ENCODE measurements at regions of chr2 and their contacts with region 1.

Region 1: DNA sequence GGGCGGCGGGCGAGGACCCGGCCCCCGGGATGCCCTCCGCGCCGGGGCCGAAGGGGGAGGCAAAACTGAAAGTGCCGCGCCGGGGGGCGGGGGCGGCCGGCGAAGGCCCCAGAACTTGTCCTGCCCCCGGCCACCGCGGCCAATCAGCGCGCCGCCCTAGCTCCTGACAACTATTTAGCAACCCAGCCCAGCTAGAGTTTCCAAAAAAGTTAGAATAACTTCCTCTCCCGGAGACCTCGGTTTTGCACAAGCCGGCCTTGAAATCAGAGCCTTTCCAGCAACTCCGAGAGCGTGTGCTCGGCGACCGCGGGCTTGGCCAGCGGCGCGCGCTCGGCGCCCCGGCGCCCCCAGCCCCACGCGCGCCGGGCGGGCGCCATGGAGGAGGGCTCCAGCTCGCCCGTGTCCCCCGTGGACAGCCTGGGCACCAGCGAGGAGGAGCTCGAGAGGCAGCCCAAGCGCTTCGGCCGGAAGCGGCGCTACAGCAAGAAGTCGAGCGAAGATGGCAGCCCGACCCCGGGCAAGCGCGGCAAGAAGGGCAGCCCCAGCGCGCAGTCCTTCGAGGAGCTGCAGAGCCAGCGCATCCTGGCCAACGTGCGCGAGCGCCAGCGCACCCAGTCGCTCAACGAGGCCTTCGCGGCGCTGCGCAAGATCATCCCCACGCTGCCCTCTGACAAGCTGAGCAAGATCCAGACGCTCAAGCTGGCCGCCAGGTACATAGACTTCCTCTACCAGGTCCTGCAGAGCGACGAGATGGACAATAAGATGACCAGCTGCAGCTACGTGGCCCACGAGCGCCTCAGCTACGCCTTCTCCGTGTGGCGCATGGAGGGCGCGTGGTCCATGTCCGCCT is at the start of gene TWIST2:
- DNase-seq: peak; percentile 91
- ATAC-seq: peak; percentile 84
- H3K4me3 ChIP-seq: peak within 1 kb of the TSS; percentile 90
- H3K27ac ChIP-seq: peak within 1 kb of the TSS; percentile 95
- H3K4me1 ChIP-seq: peaks cover 17% of the 10 kb centered on the region
- H3K27me3 ChIP-seq: no peaks in the 10 kb centered on the region
- CTCF ChIP-seq: no peak; the same call in 1 of the 2 replicates
- POLR2A ChIP-seq: peak; percentile 79
- RAD21 ChIP-seq: no peak; the same call in 1 of the 2 replicates
- total RNA-seq, gene TWIST2: 9.3 and 14.7 TPM in 2 replicates

Region 2: DNA sequence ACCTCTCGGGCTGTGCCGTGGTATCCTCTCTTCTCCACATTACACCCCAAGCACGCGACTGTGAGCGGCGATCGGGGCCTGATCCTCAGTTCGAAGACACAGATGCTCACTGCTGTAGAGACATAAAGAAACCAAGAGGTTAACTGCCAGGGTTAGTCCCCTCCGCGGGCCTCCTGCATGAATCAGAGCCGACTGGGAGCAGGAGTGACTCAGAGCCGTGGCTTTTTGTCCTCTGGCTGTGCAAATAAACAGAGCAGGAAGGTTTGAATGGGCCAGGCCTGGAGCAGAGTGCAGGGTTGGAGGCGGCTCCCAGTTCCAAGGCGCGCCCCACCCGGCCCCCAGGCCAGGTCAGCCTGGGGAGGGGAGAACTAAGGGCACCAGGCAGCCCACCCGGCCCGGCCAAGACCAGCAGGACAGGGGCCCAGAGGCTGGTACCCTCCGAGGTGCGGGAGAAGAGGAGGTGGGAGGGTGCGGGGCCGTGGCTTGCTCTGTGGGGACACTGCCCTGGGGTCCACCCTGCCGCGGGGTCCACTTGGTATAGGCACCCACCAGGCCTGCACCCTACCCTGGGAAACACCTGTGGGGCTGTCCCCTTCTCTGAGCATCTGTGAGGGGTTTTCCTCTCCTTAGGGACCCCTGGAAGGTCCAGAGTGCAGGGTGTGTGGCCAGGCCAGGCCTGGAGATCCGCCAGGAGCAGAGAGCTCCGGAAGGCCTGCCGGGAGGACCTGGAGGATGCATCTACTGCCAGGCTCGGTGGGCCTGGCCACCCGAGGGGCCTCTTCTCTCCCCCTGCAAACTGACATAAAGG is 16.3 kb after region 1 on chr2:
- CTCF ChIA-PET with region 1: interaction called, 4 read pairs
- POLR2A ChIA-PET with region 1: no interaction called
- dilution Hi-C with region 1: no loop called
- in situ Hi-C with region 1: no loop called
- intact Hi-C with region 1: loop called (anchors 1 kb)
- DNase-seq: peak; percentile 99
- ATAC-seq: peak; percentile 88
- H3K4me3 ChIP-seq: no peak overlapping the region
- H3K27ac ChIP-seq: peak overlapping the region; percentile 94
- H3K4me1 ChIP-seq: peaks cover 53% of the 10 kb centered on the region
- H3K27me3 ChIP-seq: no peaks in the 10 kb centered on the region
- CTCF ChIP-seq: no peak
- POLR2A ChIP-seq: peak; percentile 46; the same call in 1 of the 2 replicates
- RAD21 ChIP-seq: peak; percentile 21; the same call in 1 of the 2 replicates

Region 3: GRCh38 chr2:238875101-238875470 is 27.0 kb after region 1 on chr2:
- CTCF ChIA-PET with region 1: interaction called, 12 read pairs
- POLR2A ChIA-PET with region 1: no interaction called
- dilution Hi-C with region 1: no loop called
- in situ Hi-C with region 1: no loop called
- intact Hi-C with region 1: no loop called
- DNase-seq: no peak
- ATAC-seq: peak; percentile 22; the same call in 1 of the 2 replicates
- H3K4me3 ChIP-seq: no peak overlapping the region
- H3K27ac ChIP-seq: no peak overlapping the region
- H3K4me1 ChIP-seq: peaks cover 6% of the 10 kb centered on the region; the same call in 1 of the 2 replicates
- H3K27me3 ChIP-seq: no peaks in the 10 kb centered on the region
- CTCF ChIP-seq: peak; percentile 38
- POLR2A ChIP-seq: no peak
- RAD21 ChIP-seq: peak; percentile 40

Region 4: DNA sequence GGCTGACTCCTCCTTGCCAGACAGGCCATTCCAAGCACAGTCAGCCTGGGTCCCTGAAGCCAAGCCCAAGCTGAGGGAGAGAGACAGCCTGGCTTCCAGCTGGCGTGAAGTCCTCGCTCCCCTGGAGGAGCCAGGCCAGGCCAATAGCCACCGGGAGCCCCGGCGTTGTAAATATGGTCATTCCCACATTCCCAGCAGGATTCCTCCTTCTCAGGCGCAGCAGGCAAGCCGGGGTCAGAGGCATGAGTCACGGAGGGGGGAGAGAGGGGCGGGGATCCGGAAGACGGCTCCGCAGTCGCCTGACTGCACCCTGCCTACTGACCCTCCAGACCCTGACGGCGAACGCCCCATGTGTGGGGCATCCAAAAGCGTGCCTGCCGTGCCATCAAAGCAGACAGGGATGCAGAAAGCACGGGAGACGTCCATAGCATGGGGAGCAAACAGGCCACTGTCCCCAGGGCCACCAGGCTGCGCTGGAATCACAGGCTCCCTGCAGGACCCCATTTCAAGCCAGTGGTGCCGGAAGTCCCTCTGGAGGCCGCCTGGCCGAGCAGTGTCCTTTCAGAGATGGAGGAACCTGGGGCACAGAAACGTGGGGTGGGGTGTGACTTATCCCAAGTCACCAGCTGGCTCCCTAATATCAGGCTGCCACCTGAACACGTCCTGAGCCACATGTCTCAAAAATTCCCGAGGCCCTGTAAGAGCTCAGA is 48.0 kb after region 1 on chr2:
- CTCF ChIA-PET with region 1: no interaction called
- POLR2A ChIA-PET with region 1: interaction called, 3 read pairs
- dilution Hi-C with region 1: no loop called
- in situ Hi-C with region 1: no loop called
- intact Hi-C with region 1: loop called (anchors 5 kb)
- DNase-seq: peak; percentile 91
- ATAC-seq: peak; percentile 87
- H3K4me3 ChIP-seq: no peak overlapping the region
- H3K27ac ChIP-seq: peak overlapping the region; percentile 2; the same call in 1 of the 2 replicates
- H3K4me1 ChIP-seq: peaks cover 31% of the 10 kb centered on the region
- H3K27me3 ChIP-seq: no peaks in the 10 kb centered on the region
- CTCF ChIP-seq: no peak
- POLR2A ChIP-seq: no peak
- RAD21 ChIP-seq: no peak

Region 5: GRCh38 chr2:238970553-238971081 is 122.6 kb after region 1 on chr2:
- CTCF ChIA-PET with region 1: interaction called, 3 read pairs
- POLR2A ChIA-PET with region 1: no interaction called
- dilution Hi-C with region 1: no loop called
- in situ Hi-C with region 1: no loop called
- intact Hi-C with region 1: loop called (anchors 2 kb)
- DNase-seq: peak; percentile 63
- ATAC-seq: peak; percentile 90
- H3K4me3 ChIP-seq: no peak overlapping the region
- H3K27ac ChIP-seq: no peak overlapping the region
- H3K4me1 ChIP-seq: peaks cover 10% of the 10 kb centered on the region
- H3K27me3 ChIP-seq: no peaks in the 10 kb centered on the region; the same call in 1 of the 2 replicates
- CTCF ChIP-seq: peak; percentile 95
- POLR2A ChIP-seq: no peak
- RAD21 ChIP-seq: peak; percentile 80

Measured in IMR-90 (cell line).